Mucosa of descending colon (tissue), 3 donors: ENCODE measurements at regions of chr1 and their contacts with region 1.

Region 1: DNA sequence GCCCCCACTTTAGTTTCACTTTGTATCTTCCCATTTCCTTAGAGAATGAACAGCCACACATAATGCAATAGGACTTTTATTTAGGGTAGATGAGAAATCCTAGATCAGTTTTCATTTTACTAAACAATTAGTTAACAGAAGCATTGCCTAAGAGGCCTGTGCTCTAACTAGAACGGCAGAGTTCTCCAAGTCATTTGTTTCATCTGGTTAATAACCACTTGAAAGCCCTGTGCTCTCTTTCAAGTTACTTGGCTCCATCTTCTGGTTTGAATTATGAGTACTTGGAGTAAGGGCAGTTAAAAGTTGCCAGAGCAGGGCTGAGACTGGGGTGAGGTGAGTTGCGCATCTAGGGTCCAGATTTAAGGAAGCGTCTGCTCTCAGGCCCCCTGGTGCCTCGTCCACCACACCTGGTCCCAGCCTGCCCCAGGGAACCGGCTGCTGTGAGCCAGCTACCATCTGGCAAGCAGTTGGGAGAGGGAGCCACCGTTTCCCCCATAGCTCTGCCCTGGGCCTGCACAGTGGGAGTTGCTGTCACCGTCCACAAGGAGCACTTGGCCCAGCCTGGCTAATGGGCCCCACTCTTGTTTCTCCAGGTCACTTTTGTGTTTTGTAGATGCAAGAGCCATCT is 18.1 kb upstream of the SLC44A3 start:
- DNase-seq: peak in 2 of 3 donors; percentile 31 to 61
- ATAC-seq: peak; percentile 74
- H3K4me3 ChIP-seq: no peak overlapping the region
- H3K4me1 ChIP-seq: peaks cover 43% of the 10 kb centered on the region
- CTCF ChIP-seq: peak; percentile 29

Region 2: DNA sequence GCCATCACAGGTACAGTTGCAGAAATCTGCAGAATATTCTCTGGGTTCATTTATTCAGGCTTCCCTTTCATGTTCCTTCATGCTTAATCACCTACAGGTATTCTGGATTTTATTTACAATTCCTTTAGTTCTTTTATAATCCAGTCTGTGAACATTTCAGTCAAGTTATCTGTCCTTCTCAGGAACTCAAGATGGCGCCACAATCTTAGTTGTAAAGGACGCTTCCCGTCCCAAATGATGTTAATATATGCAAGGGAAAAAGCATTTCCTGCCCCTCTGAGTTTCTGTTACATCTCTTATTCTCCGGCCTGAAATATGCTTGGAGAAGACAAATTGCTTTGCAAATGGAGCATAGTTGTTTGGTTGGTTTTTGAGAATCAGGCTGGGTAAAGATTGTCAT is 279.7 kb before region 1 on chr1:
- intact Hi-C with region 1: loop called (anchors 5 kb)
- DNase-seq: peak in 1 of 3 donors; percentile 58
- ATAC-seq: peak; percentile 51
- H3K4me3 ChIP-seq: no peak overlapping the region
- H3K4me1 ChIP-seq: no peaks in the 10 kb centered on the region
- CTCF ChIP-seq: peak; percentile 16

Region 3: DNA sequence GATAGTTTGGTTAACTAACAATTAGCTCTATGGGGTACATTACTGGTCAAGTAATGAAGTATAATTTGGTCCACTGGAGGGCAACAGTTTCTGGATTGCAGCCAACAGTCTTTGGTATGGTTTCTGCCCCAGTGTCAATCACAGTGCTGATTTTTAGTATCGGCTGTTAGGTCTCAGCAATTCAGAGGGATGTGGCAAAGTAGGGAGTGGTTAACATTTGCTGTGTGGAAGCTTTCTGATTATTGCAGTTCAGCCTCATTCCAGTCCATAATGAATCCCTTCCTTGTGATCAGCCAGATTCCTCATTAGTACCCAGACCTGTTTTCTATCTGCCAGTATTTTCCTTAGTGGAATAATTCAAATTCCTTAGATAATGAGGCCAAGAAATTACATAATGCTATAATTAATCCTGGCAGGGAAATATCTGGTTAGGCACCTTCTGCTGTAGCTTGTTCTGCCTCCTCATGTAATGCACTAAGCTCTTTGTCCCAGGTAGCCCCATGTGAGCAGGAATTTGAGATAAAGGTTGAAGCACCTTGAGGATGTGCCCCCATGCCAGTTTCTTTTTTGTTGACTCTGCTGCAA is 274.5 kb before region 1 on chr1:
- intact Hi-C with region 1: loop called (anchors 5 kb)
- DNase-seq: peak in 1 of 3 donors; percentile 21
- ATAC-seq: peak; percentile 64
- H3K4me3 ChIP-seq: no peak overlapping the region
- H3K4me1 ChIP-seq: peaks cover 8% of the 10 kb centered on the region
- CTCF ChIP-seq: no peak

Region 4: GRCh38 chr1:94602316-94602715 is 199.7 kb before region 1 on chr1:
- intact Hi-C with region 1: loop called in 1 of 2 experiments (anchors 10 kb)
- DNase-seq: peak in 2 of 3 donors; percentile 40 to 59
- ATAC-seq: peak; percentile 37
- H3K4me3 ChIP-seq: no peak overlapping the region
- H3K4me1 ChIP-seq: peaks cover 26% of the 10 kb centered on the region
- CTCF ChIP-seq: no peak